Right cardiac atrium (tissue), 5 donors: ENCODE measurements at regions of chr9 and their contacts with region 1.

Region 1: GRCh38 chr9:83937911-83938323 is 16.7 kb upstream of the KIF27 start:
- DNase-seq: no peak
- ATAC-seq: peak; percentile 55 to 58
- H3K4me3 ChIP-seq: no peak overlapping the region
- H3K27ac ChIP-seq: no peak overlapping the region
- H3K4me1 ChIP-seq: peaks cover 4% of the 10 kb centered on the region
- H3K27me3 ChIP-seq: no peaks in the 10 kb centered on the region

Region 2: DNA sequence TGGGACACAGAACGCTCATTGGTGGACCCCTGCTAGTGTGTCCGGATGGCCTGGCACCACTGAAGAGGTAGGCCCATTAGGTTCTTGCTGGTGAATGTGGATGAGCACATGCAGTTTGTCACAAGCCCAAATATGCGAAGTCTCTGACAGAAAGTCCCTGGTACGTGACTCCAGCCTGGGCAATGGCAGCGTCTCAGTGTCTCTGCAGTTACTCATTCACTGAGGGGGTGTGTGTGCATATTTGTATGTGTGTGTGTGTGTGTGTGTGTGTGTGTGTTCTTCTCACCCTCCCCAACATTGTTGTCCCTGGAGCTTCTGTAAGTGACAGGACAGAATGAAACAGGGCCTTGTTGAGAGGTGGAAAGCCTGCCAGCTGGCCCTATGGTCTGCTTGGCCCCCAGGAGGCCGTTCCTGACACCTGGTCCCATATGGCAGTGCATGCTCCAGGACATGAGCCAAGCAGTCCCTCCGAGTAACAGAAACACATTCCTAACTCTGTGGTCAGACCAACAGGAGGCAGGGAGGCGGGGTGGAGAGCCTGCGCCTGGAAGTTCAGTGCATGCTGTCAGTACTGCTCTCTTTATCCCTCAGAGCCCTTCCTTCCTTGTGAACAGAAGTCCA is 232.7 kb after region 1 on chr9:
- intact Hi-C with region 1: loop called in 3 of 4 experiments (anchors 10 kb)
- DNase-seq: peak; percentile 88 to 91 (median 90)
- ATAC-seq: peak; percentile 96 to 97
- H3K4me3 ChIP-seq: no peak overlapping the region
- H3K27ac ChIP-seq: peak overlapping the region; percentile 49
- H3K4me1 ChIP-seq: no peaks in the 10 kb centered on the region
- H3K27me3 ChIP-seq: no peaks in the 10 kb centered on the region

Region 3: GRCh38 chr9:84261082-84261746 is 323.3 kb after region 1 on chr9:
- intact Hi-C with region 1: loop called (anchors 2 to 5 kb)
- DNase-seq: peak; percentile 81 to 94 (median 90)
- ATAC-seq: peak; percentile 96 to 98
- H3K4me3 ChIP-seq: peak overlapping the region; percentile 12
- H3K27ac ChIP-seq: no peak overlapping the region
- H3K4me1 ChIP-seq: no peaks in the 10 kb centered on the region
- H3K27me3 ChIP-seq: no peaks in the 10 kb centered on the region

Region 4: GRCh38 chr9:84315278-84315877 is 377.5 kb after region 1 on chr9:
- intact Hi-C with region 1: loop called in 2 of 4 experiments (anchors 5 kb)
- DNase-seq: peak; percentile 36 to 75 (median 56)
- ATAC-seq: peak; percentile 14 to 32
- H3K4me3 ChIP-seq: no peak overlapping the region
- H3K27ac ChIP-seq: no peak overlapping the region
- H3K4me1 ChIP-seq: no peaks in the 10 kb centered on the region
- H3K27me3 ChIP-seq: no peaks in the 10 kb centered on the region

Region 5: DNA sequence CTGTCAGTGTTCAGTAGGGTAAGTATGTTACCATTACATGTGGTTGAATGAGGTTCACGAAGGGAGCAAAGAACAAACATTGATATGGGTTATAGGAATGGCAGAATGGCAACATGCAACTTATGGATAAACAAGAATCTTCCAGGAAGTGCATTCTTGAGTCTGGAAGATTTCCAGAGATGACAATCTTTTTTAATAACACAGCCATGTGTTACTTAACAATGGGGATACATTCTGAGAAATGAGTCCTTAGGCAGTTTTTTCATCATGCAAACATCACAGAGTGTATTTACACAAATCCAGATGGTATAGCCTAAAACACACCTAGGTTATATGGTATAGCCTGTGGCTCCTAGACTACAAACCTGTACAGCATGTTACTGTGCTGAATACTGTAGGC is 411.8 kb after region 1 on chr9:
- intact Hi-C with region 1: no loop called
- DNase-seq: no peak
- ATAC-seq: no peak
- H3K4me3 ChIP-seq: no peak overlapping the region
- H3K27ac ChIP-seq: no peak overlapping the region
- H3K4me1 ChIP-seq: no peaks in the 10 kb centered on the region
- H3K27me3 ChIP-seq: no peaks in the 10 kb centered on the region